Spleen (tissue), 13 donors: ENCODE measurements at regions of chr5 and their contacts with region 1.

Region 1: DNA sequence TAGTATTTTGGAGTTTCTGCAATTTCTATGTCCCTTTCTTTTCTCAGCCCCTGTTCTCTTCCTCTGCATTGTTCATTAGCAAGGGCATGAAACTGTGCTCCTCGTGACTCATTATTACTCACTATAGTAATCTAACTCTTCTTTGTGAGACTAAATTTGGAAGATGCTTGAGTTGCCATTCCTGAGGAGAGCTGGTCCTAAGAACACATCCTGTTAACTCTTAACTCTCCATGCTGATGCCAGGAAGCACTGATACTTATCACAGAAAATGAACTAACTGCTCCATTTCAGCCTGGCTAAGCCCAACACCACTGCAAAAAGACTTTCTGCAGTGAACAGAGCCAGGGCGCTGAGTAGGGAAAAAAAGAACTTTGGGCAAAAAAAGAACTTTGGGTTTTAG is 10.6 kb upstream of the CSNK1A1 start:
- DNase-seq: no peak
- H3K4me3 ChIP-seq: no peak overlapping the region
- H3K27ac ChIP-seq: peak overlapping the region in 7 of 8 donors; percentile 33 to 67 (median 57)
- H3K4me1 ChIP-seq: peaks cover 3 to 43% (median 24%) of the 10 kb centered on the region in 6 donors
- H3K27me3 ChIP-seq: no peaks in the 10 kb centered on the region
- CTCF ChIP-seq: no peak
- POLR2A ChIP-seq: no peak

Region 2: GRCh38 chr5:149133795-149134780 is 427.8 kb before region 1 on chr5:
- intact Hi-C with region 1: loop called (anchors 10 kb)
- DNase-seq: no peak
- H3K4me3 ChIP-seq: no peak overlapping the region
- H3K27ac ChIP-seq: no peak overlapping the region
- H3K4me1 ChIP-seq: peaks cover 0 to 21% (median 0%) of the 10 kb centered on the region in 6 donors
- H3K27me3 ChIP-seq: peaks cover 0 to 29% (median 5%) of the 10 kb centered on the region in 7 donors
- CTCF ChIP-seq: no peak
- POLR2A ChIP-seq: no peak

Region 3: DNA sequence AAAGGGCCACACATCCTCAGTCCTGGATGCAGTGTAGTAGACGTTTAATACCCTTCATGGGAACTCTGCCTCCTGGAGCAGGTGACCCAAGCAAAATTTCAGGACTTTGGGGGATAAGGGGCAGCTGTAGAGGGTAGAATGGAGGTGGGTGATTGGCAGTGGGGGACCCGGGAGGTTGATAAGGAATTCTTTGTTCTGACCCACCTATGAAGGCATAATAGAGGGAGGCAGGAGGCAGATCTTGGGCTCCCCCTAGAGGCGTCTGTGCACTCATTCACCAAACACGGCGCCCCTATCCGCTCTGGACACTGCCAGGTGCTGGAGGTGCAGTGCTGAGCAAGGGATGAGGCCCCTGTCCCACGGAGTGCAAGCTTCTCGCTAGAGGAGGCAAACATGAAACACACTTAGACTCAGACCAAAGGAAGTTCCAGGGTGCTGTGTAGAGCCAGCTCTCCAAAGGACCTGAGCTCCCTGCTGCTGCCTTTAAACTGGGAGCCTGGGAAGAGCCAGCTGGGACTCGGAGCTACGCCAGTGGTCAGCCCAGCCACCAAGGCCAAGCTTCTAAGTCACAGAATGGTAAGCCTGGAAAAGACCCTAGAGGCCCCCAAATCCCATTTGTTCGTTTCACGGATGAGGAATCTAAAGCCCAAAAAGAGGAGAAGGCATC is 190.4 kb before region 1 on chr5:
- intact Hi-C with region 1: loop called (anchors 5 kb)
- DNase-seq: peak; percentile 88
- H3K4me3 ChIP-seq: no peak overlapping the region
- H3K27ac ChIP-seq: no peak overlapping the region
- H3K4me1 ChIP-seq: peaks cover 0 to 20% (median 4%) of the 10 kb centered on the region in 6 donors
- H3K27me3 ChIP-seq: no peaks in the 10 kb centered on the region
- CTCF ChIP-seq: peak; percentile 23 to 87 (median 75)
- POLR2A ChIP-seq: no peak

Region 4: DNA sequence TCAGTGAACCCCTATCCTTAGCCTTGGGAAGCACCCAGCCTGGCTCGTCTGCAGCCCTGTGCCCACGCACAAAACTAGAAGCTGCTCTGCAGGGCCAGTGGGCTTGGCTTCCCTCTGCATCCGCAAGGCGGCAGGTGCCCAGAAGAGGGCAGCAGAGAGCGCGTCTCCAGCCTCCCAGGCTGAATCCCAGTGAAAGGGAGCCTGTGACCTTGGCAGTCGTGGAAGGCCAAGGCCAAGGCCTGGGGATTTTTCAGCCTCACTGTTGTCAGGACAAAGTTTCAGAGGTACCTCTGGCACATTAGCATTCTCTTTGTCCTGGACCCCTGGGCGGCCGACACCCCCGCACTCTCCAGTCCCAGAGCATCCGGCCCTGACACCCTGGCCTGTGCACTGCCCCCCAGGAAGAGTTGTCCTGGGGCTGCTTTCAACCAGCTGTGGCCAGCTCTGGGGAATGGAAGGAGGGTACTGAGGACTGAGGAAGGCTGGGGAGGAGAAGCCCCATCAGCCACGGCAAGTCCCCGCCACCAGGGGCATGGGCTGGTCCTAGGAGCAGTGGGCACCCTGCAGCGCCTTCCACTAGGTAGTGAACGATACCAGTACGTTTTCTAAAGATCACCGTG is 119.2 kb before region 1 on chr5:
- intact Hi-C with region 1: loop called (anchors 5 kb)
- DNase-seq: peak; percentile 92
- H3K4me3 ChIP-seq: no peak overlapping the region
- H3K27ac ChIP-seq: peak overlapping the region in 6 of 8 donors; percentile 32 to 71 (median 60)
- H3K4me1 ChIP-seq: peaks cover 0 to 24% (median 15%) of the 10 kb centered on the region in 6 donors
- H3K27me3 ChIP-seq: no peaks in the 10 kb centered on the region
- CTCF ChIP-seq: peak; percentile 76 to 96 (median 90)
- POLR2A ChIP-seq: no peak

Region 5: DNA sequence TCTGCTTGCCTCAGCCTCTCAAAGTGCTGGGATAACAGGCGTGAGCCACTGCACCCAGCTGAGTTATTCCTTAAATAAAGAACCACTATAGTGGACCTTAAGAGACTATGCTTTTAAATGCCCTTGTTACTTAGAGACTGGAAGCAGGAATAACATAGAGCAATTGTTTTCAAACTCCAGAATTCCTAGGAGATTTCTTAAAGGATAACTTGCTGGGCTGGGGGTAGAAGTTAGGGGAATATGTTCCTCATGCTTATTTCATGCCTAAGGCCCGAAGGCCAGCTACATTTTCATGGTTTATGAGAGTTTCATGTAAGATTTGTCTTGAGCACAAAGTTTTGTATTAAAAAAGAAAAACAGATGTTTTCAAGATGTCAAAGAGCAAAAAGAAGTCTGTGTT is 58.8 kb before region 1 on chr5:
- intact Hi-C with region 1: no loop called
- DNase-seq: no peak
- H3K4me3 ChIP-seq: no peak overlapping the region
- H3K27ac ChIP-seq: no peak overlapping the region
- H3K4me1 ChIP-seq: no peaks in the 10 kb centered on the region
- H3K27me3 ChIP-seq: no peaks in the 10 kb centered on the region
- CTCF ChIP-seq: no peak
- POLR2A ChIP-seq: no peak

Region 6: GRCh38 chr5:149731639-149732323 is 169.9 kb after region 1 on chr5:
- intact Hi-C with region 1: no loop called
- DNase-seq: peak; percentile 92
- H3K4me3 ChIP-seq: peak overlapping the region; percentile 79 to 99 (median 84)
- H3K27ac ChIP-seq: peak overlapping the region in 7 of 8 donors; percentile 61 to 85 (median 72)
- H3K4me1 ChIP-seq: peaks cover 0 to 61% (median 13%) of the 10 kb centered on the region in 6 donors
- H3K27me3 ChIP-seq: peaks cover 0 to 23% (median 0%) of the 10 kb centered on the region in 7 donors
- CTCF ChIP-seq: peak in 1 of 11 experiments; percentile 29
- POLR2A ChIP-seq: no peak

Region 7: GRCh38 chr5:149834246-149834855 is 272.5 kb after region 1 on chr5:
- intact Hi-C with region 1: no loop called
- DNase-seq: no peak
- H3K4me3 ChIP-seq: no peak overlapping the region
- H3K27ac ChIP-seq: no peak overlapping the region
- H3K4me1 ChIP-seq: no peaks in the 10 kb centered on the region
- H3K27me3 ChIP-seq: no peaks in the 10 kb centered on the region
- CTCF ChIP-seq: peak in 10 of 11 experiments; percentile 39 to 73 (median 64)
- POLR2A ChIP-seq: no peak